GM10248 (cell line): ENCODE measurements at regions of chr18 and their contacts with region 1.

Region 1: GRCh38 chr18:5431836-5432575 is 111.8 kb downstream of the EPB41L3 start:
- DNase-seq: no peak
- CTCF ChIP-seq: no peak

Region 2: GRCh38 chr18:4870177-4870773 is 561.7 kb before region 1 on chr18:
- CTCF ChIA-PET with region 1: no interaction called
- POLR2A ChIA-PET with region 1: no interaction called
- DNase-seq: no peak
- CTCF ChIP-seq: no peak

Region 3: DNA sequence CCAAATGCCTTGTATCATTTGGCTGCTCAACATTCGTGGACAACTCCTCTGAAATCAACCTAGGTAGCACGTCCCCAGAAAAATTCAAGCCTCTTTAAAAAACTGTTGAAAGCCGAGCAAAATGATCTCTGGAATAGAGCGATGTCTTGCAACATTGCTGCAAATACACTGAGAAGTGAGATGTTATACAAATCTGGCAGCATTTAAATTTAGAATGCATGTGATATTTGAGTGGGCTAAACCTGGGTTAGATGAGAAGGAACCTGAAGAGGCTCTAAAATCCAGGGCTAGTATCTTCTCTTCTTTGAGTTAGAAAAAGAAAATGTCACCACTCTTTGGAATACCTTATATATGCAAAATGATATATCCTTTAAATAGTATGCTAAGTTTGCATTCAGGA is 55.0 kb before region 1 on chr18:
- CTCF ChIA-PET with region 1: no interaction called
- POLR2A ChIA-PET with region 1: no interaction called
- DNase-seq: no peak
- CTCF ChIP-seq: no peak

Region 4: GRCh38 chr18:5420906-5421305 is 11.1 kb before region 1 on chr18:
- CTCF ChIA-PET with region 1: interaction called, 16 read pairs
- POLR2A ChIA-PET with region 1: no interaction called
- DNase-seq: no peak
- CTCF ChIP-seq: no peak

Region 5: GRCh38 chr18:5456577-5457463 is 24.8 kb after region 1 on chr18:
- CTCF ChIA-PET with region 1: no interaction called
- POLR2A ChIA-PET with region 1: no interaction called
- DNase-seq: no peak
- CTCF ChIP-seq: no peak